Activated B cell treated with CpG ODN at 0.5 μM for 24 hours (primary cell): ENCODE measurements at regions of chr5 and their contacts with region 1.

Region 1: DNA sequence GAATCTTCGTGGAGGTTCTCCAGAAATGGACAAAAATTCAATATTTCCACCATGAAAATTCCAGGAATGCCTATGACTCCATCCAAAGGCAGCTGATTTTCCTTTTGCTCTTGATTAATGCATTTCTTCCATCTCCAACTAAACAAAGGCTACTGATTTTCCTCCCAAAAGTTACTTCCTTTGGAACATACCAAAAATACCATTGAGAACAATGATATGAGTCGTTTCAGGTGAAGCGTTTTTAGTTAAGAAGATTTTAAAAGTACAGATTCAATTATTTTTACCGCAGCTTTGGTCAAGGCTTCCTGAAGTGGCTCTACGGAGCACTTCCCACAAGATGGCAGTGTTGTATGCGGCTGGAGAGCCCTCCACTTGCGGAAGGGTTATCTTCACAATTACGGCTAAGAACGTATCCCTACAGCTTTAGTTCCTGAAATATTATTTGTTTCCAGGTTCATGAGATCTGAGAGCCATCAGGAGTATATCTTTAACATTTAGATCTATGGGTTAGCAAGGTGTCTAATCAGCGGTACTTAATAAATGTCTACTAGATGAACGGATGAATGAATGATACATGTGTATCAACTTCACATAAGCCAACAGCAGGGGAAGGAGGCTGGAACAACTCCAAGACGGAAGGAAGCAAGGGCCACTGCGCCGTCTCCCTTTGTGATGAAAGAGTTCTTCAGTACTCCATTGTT is 35.9 kb upstream of the ARSB start:
- DNase-seq: no peak
- ATAC-seq: peak; percentile 66
- H3K4me3 Mint-ChIP-seq: no peak overlapping the region
- H3K27ac Mint-ChIP-seq: no peak overlapping the region
- H3K4me1 Mint-ChIP-seq: peaks cover 17% of the 10 kb centered on the region
- H3K27me3 Mint-ChIP-seq: peaks cover 50% of the 10 kb centered on the region
- CTCF ChIP-seq: no peak

Region 2: GRCh38 chr5:78497573-78498533 is 523.2 kb before region 1 on chr5:
- CTCF ChIA-PET with region 1: no interaction called
- POLR2A ChIA-PET with region 1: no interaction called
- intact Hi-C with region 1: no loop called
- DNase-seq: no peak
- ATAC-seq: no peak
- H3K4me3 Mint-ChIP-seq: no peak overlapping the region
- H3K27ac Mint-ChIP-seq: no peak overlapping the region
- H3K4me1 Mint-ChIP-seq: peaks cover 39% of the 10 kb centered on the region
- H3K27me3 Mint-ChIP-seq: no peaks in the 10 kb centered on the region
- CTCF ChIP-seq: no peak

Region 3: DNA sequence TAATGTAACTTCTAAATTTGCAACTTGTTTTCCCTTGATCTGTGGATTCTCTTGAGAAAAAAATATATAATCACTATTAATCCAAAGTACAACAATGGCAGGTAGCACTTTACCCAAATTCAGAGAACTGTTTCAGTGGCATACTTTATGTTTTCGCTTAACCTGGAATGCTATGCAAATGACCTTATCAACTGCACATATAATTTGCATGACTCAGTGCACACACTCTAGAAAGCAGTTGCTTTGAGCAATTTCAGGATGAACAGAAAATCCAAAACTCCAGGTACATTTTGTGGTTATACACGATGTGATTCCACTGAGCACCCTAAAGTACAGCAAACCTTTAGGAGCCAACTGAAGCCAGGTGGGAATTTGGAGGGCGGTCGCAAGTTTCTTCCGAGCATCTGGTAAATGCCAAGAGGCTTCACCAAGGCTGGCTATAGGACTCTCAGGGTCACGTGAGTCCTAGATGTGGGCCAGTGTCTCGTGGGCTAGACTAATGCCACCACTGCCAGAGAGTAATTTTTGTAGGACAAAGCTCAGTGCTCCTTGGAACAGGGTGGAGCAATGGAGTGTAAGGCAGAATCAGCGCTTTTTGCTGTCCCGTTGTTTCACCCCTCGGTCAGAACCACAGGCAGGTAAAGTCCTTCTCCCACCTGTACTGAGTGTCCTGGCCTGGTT is 11.2 kb after region 1 on chr5:
- CTCF ChIA-PET with region 1: interaction called, 10 read pairs
- POLR2A ChIA-PET with region 1: no interaction called
- intact Hi-C with region 1: no loop called
- DNase-seq: no peak
- ATAC-seq: no peak
- H3K4me3 Mint-ChIP-seq: no peak overlapping the region
- H3K27ac Mint-ChIP-seq: no peak overlapping the region
- H3K4me1 Mint-ChIP-seq: no peaks in the 10 kb centered on the region
- H3K27me3 Mint-ChIP-seq: peaks cover 3% of the 10 kb centered on the region
- CTCF ChIP-seq: no peak

Region 4: GRCh38 chr5:79109527-79110492 is 88.8 kb after region 1 on chr5:
- CTCF ChIA-PET with region 1: interaction called, 6 read pairs
- POLR2A ChIA-PET with region 1: no interaction called
- intact Hi-C with region 1: loop called (anchors 1 kb)
- DNase-seq: no peak
- ATAC-seq: peak; percentile 42
- H3K4me3 Mint-ChIP-seq: no peak overlapping the region
- H3K27ac Mint-ChIP-seq: no peak overlapping the region
- H3K4me1 Mint-ChIP-seq: no peaks in the 10 kb centered on the region
- H3K27me3 Mint-ChIP-seq: peaks cover 57% of the 10 kb centered on the region
- CTCF ChIP-seq: no peak

Region 5: DNA sequence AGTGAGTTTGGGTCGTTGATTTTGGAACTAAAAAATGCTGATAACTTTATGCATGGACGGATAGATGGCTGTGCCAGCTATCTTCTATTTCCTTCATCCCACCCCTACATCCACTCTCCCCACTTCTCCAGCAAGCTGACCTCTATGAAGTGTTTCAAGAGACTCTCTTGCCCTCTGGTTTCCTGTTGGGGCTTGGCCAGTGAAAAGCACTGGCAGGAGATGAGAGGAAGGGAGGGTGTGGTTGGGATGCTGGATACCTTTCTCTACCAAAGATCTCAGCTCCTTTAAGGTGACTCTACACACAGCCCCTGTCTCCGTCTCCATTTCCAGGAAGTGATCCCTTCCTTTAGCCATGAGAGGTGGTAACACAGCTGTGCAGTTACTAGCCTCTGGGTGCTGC is 185.0 kb after region 1 on chr5:
- CTCF ChIA-PET with region 1: no interaction called
- POLR2A ChIA-PET with region 1: no interaction called
- intact Hi-C with region 1: no loop called
- DNase-seq: no peak
- ATAC-seq: no peak
- H3K4me3 Mint-ChIP-seq: no peak overlapping the region
- H3K27ac Mint-ChIP-seq: no peak overlapping the region
- H3K4me1 Mint-ChIP-seq: no peaks in the 10 kb centered on the region
- H3K27me3 Mint-ChIP-seq: no peaks in the 10 kb centered on the region
- CTCF ChIP-seq: no peak

Region 6: GRCh38 chr5:79464695-79465332 is 443.8 kb after region 1 on chr5:
- CTCF ChIA-PET with region 1: interaction called, 11 read pairs
- POLR2A ChIA-PET with region 1: no interaction called
- intact Hi-C with region 1: loop called (anchors 1 kb)
- DNase-seq: no peak
- ATAC-seq: no peak
- H3K4me3 Mint-ChIP-seq: no peak overlapping the region
- H3K27ac Mint-ChIP-seq: no peak overlapping the region
- H3K4me1 Mint-ChIP-seq: no peaks in the 10 kb centered on the region
- H3K27me3 Mint-ChIP-seq: peaks cover 1% of the 10 kb centered on the region
- CTCF ChIP-seq: no peak

Region 7: GRCh38 chr5:79857714-79858409 is 836.9 kb after region 1 on chr5:
- CTCF ChIA-PET with region 1: interaction called, 3 read pairs
- POLR2A ChIA-PET with region 1: no interaction called
- intact Hi-C with region 1: loop called (anchors 1 kb)
- DNase-seq: peak; percentile 53
- ATAC-seq: peak; percentile 47
- H3K4me3 Mint-ChIP-seq: no peak overlapping the region
- H3K27ac Mint-ChIP-seq: no peak overlapping the region
- H3K4me1 Mint-ChIP-seq: no peaks in the 10 kb centered on the region
- H3K27me3 Mint-ChIP-seq: peaks cover 10% of the 10 kb centered on the region
- CTCF ChIP-seq: no peak